Gastrocnemius medialis (tissue), 4 donors: ENCODE measurements at regions of chr6 and their contacts with region 1.

Region 1: DNA sequence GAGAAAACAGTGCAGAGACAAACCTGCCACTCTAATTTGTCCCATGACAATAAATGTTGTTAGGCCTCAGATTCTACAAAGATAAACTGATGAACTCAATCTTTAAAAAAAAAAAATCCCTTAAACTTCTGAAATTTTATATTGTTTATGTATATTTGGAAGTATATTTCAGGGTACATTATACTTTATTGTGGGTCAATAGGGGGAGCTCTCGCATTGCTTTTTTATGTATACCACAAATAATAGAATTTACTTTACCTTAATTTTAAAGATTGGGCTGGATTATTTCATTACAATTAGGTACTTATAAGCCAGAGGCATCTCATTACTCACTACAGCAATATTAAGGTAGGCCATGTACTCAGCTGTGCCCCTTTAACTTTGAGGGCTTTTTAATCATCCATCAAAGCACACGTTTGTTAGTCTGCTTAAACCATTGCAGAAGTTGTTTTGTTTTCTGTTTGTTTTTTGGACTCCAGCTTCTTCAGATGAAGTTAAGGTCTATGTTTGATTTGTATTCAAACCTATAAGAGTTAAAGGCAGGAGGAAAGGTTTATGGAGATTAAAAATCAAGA is 56.3 kb upstream of the EYA4 start:
- DNase-seq: no peak
- ATAC-seq: no peak
- H3K4me3 ChIP-seq: no peak overlapping the region
- H3K27ac ChIP-seq: peak overlapping the region in 1 of 4 donors; percentile 42
- H3K4me1 ChIP-seq: no peaks in the 10 kb centered on the region
- H3K27me3 ChIP-seq: no peaks in the 10 kb centered on the region
- CTCF ChIP-seq: peak; percentile 42 to 69 (median 59)
- POLR2A ChIP-seq: no peak

Region 2: DNA sequence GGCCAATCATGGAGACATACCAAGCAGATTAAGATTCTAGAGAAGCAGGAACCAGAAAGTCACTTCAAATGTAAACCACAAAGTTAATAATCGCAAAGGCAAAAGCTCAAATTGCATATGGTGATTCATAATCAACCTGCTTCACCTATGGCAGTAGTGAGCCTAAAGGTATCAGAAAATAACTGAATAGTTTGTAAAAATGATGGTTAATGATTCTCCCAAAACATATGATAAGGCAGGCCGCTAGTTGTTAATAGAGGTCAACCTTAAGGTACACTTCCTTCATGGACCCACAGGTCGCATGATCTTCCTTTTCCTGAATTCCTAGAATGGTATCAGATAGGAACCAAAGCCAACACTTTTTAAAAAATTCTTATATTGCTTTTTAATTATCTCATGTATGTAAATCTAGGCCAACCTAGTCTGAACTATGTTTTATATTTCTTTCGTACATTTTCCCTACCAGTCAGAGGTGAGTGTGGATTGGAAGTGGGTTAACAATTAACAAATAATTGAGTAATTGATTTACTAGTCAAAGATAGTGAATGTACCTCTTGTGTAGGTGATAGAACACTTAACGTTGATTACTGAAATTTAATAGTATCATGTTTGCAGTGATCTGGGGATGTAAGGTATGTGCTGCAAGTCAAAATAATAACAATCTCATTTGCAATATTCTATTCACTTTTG is 577.2 kb before region 1 on chr6:
- in situ Hi-C with region 1: no loop called
- intact Hi-C with region 1: no loop called
- DNase-seq: no peak
- ATAC-seq: no peak
- H3K4me3 ChIP-seq: no peak overlapping the region
- H3K27ac ChIP-seq: no peak overlapping the region
- H3K4me1 ChIP-seq: no peaks in the 10 kb centered on the region
- H3K27me3 ChIP-seq: no peaks in the 10 kb centered on the region
- CTCF ChIP-seq: no peak
- POLR2A ChIP-seq: no peak

Region 3: DNA sequence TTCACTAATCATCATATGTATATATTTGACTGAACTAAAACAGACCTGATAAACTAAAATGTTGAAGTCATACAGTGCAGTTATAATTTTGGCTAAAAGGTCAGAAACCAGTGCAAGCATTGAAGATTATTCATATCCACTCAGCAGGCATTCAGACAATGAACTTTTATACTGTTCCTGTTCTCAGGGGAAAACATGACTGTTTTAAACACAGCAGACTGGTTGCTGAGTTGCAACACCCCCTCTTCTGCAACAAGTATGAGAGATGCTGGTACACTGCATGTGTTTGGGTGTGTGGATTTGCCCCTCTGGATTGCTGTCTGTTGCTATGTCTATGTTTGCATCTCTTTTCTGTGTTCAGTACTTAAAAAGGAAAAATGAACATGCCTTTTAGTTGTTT is 263.0 kb after region 1 on chr6:
- in situ Hi-C with region 1: no loop called
- intact Hi-C with region 1: loop called (anchors 5 kb)
- DNase-seq: no peak
- ATAC-seq: no peak
- H3K4me3 ChIP-seq: no peak overlapping the region
- H3K27ac ChIP-seq: no peak overlapping the region
- H3K4me1 ChIP-seq: no peaks in the 10 kb centered on the region
- H3K27me3 ChIP-seq: no peaks in the 10 kb centered on the region
- CTCF ChIP-seq: no peak
- POLR2A ChIP-seq: no peak

Region 4: DNA sequence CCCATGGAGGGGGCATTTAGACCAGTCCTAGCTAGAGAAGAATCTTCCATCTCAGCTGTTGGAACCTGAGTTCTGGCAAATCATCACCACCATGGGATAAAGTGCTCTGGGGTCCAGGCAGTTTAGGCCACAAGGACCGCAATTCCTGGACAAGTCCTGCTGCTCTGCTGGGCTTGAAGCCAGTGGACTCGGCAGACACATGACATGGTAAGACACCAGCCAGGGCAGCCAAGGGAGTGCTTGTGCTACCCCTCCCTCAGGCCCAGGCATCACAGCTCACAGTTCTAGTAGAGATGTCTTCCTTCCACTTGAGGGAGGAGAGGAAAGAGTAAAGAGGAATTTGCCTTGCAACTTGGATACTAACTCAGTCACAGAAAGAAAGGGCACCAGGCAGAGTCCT is 302.3 kb after region 1 on chr6:
- in situ Hi-C with region 1: no loop called
- intact Hi-C with region 1: no loop called
- DNase-seq: no peak
- ATAC-seq: peak in 1 of 2 donors; percentile 26
- H3K4me3 ChIP-seq: no peak overlapping the region
- H3K27ac ChIP-seq: peak overlapping the region in 1 of 4 donors; percentile 3
- H3K4me1 ChIP-seq: no peaks in the 10 kb centered on the region
- H3K27me3 ChIP-seq: no peaks in the 10 kb centered on the region
- CTCF ChIP-seq: no peak
- POLR2A ChIP-seq: no peak

Region 5: GRCh38 chr6:133512410-133513016 is 327.6 kb after region 1 on chr6:
- in situ Hi-C with region 1: loop called in 1 of 4 experiments (anchors 10 kb)
- intact Hi-C with region 1: loop called (anchors 5 kb)
- DNase-seq: peak in 1 of 2 donors; percentile 37
- ATAC-seq: no peak
- H3K4me3 ChIP-seq: no peak overlapping the region
- H3K27ac ChIP-seq: no peak overlapping the region
- H3K4me1 ChIP-seq: no peaks in the 10 kb centered on the region
- H3K27me3 ChIP-seq: no peaks in the 10 kb centered on the region
- CTCF ChIP-seq: peak in 4 of 5 experiments; percentile 31 to 52 (median 36)
- POLR2A ChIP-seq: no peak